B cell (primary cell): ENCODE measurements at regions of chr12 and their contacts with region 1.

Region 1: DNA sequence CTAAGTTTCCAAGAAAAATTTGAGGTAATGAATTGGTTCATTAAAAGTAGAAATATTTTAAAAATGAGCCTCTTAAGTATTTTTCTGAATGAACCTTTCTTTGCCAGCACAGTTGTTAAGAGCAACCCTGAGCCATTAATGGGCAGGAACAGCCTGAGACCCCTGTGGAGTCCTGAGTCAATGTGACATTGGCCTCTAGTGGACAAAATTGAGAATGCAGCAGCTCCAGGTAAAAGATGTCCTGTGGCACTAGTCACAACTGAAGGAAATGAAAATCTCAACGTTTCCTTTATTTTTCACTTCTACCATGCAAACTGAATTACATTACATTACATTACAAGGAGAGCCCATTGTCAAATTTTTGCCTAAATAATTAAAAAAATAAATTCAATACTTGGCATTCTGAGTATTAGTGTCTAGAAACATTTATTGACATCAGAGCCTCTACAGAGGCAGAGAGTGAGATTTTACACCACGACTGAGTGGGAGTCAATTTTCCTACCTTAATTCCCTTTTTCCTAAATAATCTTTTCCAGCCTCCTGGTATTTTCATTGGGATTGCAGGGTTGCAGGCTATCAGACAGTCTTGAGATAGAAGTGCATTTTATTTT is 135.7 kb downstream of the PPM1H start:
- DNase-seq: peak; percentile 68
- ATAC-seq: peak; percentile 80
- H3K4me3 ChIP-seq: no peak overlapping the region
- H3K4me3 Mint-ChIP-seq: no peak overlapping the region
- H3K27ac ChIP-seq: no peak overlapping the region
- H3K27ac Mint-ChIP-seq: no peak overlapping the region
- H3K4me1 ChIP-seq: no peaks in the 10 kb centered on the region
- H3K4me1 Mint-ChIP-seq: no peaks in the 10 kb centered on the region
- H3K27me3 ChIP-seq: no peaks in the 10 kb centered on the region
- H3K27me3 Mint-ChIP-seq: no peaks in the 10 kb centered on the region
- CTCF ChIP-seq: peak; percentile 98

Region 2: DNA sequence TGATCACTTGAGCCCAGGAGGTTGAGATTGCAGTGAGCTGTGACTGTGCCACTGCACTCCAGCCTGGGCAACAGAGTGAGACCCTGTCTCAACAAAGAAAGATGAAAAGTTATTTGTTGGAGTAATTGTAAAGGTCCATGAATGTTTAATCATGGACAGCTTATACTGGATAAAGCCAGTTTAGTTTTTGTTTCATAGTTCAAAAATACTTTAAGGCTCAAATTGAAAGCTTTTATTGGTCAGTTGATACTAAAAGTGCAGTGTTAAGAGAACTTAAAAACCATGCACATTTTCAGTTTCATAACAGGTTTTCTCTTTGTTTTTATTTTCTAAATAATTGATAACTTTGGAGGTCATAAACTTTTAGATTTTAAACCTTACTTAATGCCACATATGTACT is 224.2 kb before region 1 on chr12:
- CTCF ChIA-PET with region 1: interaction called, 349 read pairs
- POLR2A ChIA-PET with region 1: no interaction called
- intact Hi-C with region 1: no loop called
- DNase-seq: no peak
- ATAC-seq: no peak
- H3K4me3 ChIP-seq: no peak overlapping the region
- H3K4me3 Mint-ChIP-seq: no peak overlapping the region
- H3K27ac ChIP-seq: no peak overlapping the region
- H3K27ac Mint-ChIP-seq: no peak overlapping the region
- H3K4me1 ChIP-seq: no peaks in the 10 kb centered on the region
- H3K4me1 Mint-ChIP-seq: no peaks in the 10 kb centered on the region
- H3K27me3 ChIP-seq: no peaks in the 10 kb centered on the region
- H3K27me3 Mint-ChIP-seq: no peaks in the 10 kb centered on the region
- CTCF ChIP-seq: no peak

Region 3: GRCh38 chr12:62785941-62786559 is 13.2 kb before region 1 on chr12:
- CTCF ChIA-PET with region 1: interaction called, 40 read pairs
- POLR2A ChIA-PET with region 1: no interaction called
- intact Hi-C with region 1: no loop called
- DNase-seq: no peak
- ATAC-seq: no peak
- H3K4me3 ChIP-seq: no peak overlapping the region
- H3K4me3 Mint-ChIP-seq: no peak overlapping the region
- H3K27ac ChIP-seq: no peak overlapping the region
- H3K27ac Mint-ChIP-seq: no peak overlapping the region
- H3K4me1 ChIP-seq: no peaks in the 10 kb centered on the region
- H3K4me1 Mint-ChIP-seq: no peaks in the 10 kb centered on the region
- H3K27me3 ChIP-seq: no peaks in the 10 kb centered on the region
- H3K27me3 Mint-ChIP-seq: no peaks in the 10 kb centered on the region
- CTCF ChIP-seq: no peak